ENCODE measurements at regions of chr11 and their contacts with region 1.

Region 1: DNA sequence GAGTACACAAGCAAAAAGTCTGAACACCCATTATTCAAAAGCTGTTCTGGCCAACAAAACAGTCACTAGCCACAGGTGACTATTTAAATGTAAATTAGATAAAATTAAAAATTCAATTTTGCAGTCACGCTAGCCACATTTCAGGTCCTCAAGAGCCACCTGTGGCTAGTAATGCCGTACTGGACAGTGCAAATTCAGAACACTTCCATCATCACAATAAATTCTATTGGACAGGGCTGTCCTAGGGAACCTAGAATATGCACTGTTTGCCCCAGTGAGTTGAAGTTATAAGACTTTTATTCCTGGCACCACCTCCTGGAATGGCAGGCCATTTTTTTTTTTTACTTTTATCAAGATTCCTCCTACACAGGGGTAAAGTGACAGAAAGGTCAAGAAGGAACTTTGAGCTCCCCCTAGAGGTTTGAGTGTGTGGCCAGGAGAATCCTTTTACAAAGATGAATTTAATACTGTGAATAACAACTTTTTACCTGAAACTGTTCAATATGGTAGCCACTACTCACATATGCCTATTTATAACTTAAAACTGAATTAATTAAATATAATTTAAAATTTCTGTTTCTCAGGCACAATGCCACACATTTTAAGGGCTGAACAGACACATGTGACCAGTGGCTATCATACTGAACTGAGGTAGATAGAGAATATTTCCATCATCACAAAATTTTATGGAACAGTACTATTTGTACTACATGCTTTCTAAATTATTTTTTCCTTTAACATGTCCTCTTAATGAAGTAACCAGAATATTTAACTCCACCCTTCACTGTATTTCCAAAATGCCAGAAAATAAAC is 6.5 kb downstream of the MSANTD2 start:
- DNase-seq: peak; percentile 47
- ATAC-seq: peak; percentile 71
- H3K4me3 Mint-ChIP-seq: no peak overlapping the region
- H3K27ac Mint-ChIP-seq: no peak overlapping the region
- H3K4me1 Mint-ChIP-seq: peaks cover 48% of the 10 kb centered on the region
- H3K27me3 Mint-ChIP-seq: no peaks in the 10 kb centered on the region
- CTCF ChIP-seq: peak; percentile 76

Region 2: GRCh38 chr11:124699547-124699946 is 94.1 kb before region 1 on chr11:
- CTCF ChIA-PET with region 1: no interaction called
- POLR2A ChIA-PET with region 1: no interaction called
- intact Hi-C with region 1: no loop called
- DNase-seq: no peak
- ATAC-seq: no peak
- H3K4me3 Mint-ChIP-seq: no peak overlapping the region
- H3K27ac Mint-ChIP-seq: no peak overlapping the region
- H3K4me1 Mint-ChIP-seq: no peaks in the 10 kb centered on the region
- H3K27me3 Mint-ChIP-seq: peaks cover 4% of the 10 kb centered on the region
- CTCF ChIP-seq: no peak

Region 3: DNA sequence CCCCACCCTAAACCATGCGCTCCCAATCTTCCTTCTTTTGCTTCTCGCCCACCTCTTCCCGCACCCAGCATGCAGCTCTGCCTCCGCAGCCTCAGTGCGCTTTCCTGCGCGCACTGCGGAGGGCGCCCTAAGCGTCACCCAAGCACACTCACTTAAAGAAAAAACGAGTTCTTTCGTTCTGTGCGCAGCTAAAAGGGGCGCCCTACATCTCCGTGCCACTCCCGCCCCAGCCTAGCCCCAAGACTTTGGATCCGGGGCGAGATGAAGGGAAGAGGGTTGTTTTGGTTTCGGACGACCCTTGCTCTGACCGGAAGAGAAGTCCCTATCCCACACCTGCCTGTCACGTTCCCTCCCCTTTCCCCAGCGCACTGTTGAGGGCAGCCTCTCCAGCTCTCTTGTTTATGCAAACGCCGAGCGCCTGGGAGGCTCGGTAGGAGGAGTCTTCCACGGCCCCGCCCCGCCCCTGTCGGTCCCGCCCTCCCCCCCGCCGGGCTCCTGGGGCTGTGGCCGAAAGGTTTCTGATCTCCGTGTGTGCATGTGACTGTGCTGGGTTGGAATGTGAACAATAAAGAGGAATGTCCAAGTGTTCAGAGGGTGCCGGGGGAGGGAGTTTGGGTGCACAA is 46.9 kb before region 1 on chr11:
- CTCF ChIA-PET with region 1: interaction called, 11 read pairs
- POLR2A ChIA-PET with region 1: no interaction called
- intact Hi-C with region 1: no loop called
- DNase-seq: peak; percentile 79
- ATAC-seq: peak; percentile 92
- H3K4me3 Mint-ChIP-seq: peak overlapping the region; percentile 79
- H3K27ac Mint-ChIP-seq: peak overlapping the region; percentile 79
- H3K4me1 Mint-ChIP-seq: peaks cover 4% of the 10 kb centered on the region
- H3K27me3 Mint-ChIP-seq: peaks cover 6% of the 10 kb centered on the region
- CTCF ChIP-seq: no peak

Region 4: GRCh38 chr11:124769801-124770639 is 23.7 kb before region 1 on chr11:
- CTCF ChIA-PET with region 1: interaction called, 42 read pairs
- POLR2A ChIA-PET with region 1: no interaction called
- intact Hi-C with region 1: no loop called
- DNase-seq: no peak
- ATAC-seq: no peak
- H3K4me3 Mint-ChIP-seq: no peak overlapping the region
- H3K27ac Mint-ChIP-seq: no peak overlapping the region
- H3K4me1 Mint-ChIP-seq: peaks cover 2% of the 10 kb centered on the region
- H3K27me3 Mint-ChIP-seq: no peaks in the 10 kb centered on the region
- CTCF ChIP-seq: no peak

Region 5: GRCh38 chr11:124778281-124778680 is 15.4 kb before region 1 on chr11:
- CTCF ChIA-PET with region 1: interaction called, 24 read pairs
- POLR2A ChIA-PET with region 1: interaction called, 3 read pairs
- intact Hi-C with region 1: no loop called
- DNase-seq: no peak
- ATAC-seq: no peak
- H3K4me3 Mint-ChIP-seq: no peak overlapping the region
- H3K27ac Mint-ChIP-seq: no peak overlapping the region
- H3K4me1 Mint-ChIP-seq: peaks cover 11% of the 10 kb centered on the region
- H3K27me3 Mint-ChIP-seq: no peaks in the 10 kb centered on the region
- CTCF ChIP-seq: no peak

Region 6: GRCh38 chr11:124855437-124855836 is 61.8 kb after region 1 on chr11:
- CTCF ChIA-PET with region 1: no interaction called
- POLR2A ChIA-PET with region 1: no interaction called
- intact Hi-C with region 1: no loop called
- DNase-seq: no peak
- ATAC-seq: no peak
- H3K4me3 Mint-ChIP-seq: no peak overlapping the region
- H3K27ac Mint-ChIP-seq: no peak overlapping the region
- H3K4me1 Mint-ChIP-seq: no peaks in the 10 kb centered on the region
- H3K27me3 Mint-ChIP-seq: peaks cover 8% of the 10 kb centered on the region
- CTCF ChIP-seq: no peak